Breast epithelium (tissue), 4 donors: ENCODE measurements at regions of chr11 and their contacts with region 1.

Region 1: DNA sequence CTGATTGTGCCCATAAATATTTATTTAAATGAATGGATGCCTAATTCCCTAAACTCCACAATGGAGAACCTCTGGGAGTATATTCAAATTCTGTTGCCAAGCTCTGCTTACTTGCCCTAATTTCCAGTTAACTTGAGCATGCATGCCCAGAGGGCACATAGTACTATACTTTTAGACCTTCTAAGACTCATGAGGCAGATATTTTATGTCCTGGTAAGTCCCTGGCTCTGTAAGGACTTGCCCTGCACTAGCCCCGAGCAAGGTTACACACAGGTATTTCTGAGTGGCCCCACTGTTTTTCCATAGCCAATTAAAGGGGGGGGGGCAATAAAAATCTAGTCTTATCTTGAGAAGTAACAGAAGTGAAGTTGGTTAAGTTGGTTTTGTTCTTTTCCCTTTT is 21.1 kb upstream of the CAPRIN1 start:
- DNase-seq: no peak
- H3K4me3 ChIP-seq: no peak overlapping the region
- H3K27ac ChIP-seq: no peak overlapping the region
- H3K4me1 ChIP-seq: no peaks in the 10 kb centered on the region
- H3K27me3 ChIP-seq: no peaks in the 10 kb centered on the region
- CTCF ChIP-seq: no peak
- POLR2A ChIP-seq: no peak

Region 2: DNA sequence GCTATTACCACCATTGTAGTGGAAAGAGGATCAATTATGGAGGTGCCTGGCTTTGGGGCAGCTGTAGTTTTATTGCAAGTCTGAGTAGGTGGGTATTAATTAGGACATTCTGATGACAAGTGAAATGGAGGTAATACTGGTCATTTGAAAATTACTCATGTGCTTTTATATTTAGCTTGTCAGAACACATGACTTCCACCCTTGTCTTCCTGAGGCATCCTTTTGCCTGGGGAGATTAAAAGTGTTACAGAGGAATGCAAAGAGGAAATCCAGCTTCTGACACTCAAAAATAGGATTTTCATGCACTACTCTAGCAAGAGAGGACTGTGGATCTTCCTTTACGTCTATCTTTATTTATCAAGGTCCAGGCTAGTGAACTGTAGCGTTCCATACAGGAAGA is 23.5 kb before region 1 on chr11:
- intact Hi-C with region 1: no loop called
- DNase-seq: no peak
- H3K4me3 ChIP-seq: no peak overlapping the region
- H3K27ac ChIP-seq: no peak overlapping the region
- H3K4me1 ChIP-seq: no peaks in the 10 kb centered on the region
- H3K27me3 ChIP-seq: no peaks in the 10 kb centered on the region
- CTCF ChIP-seq: no peak
- POLR2A ChIP-seq: no peak

Region 3: GRCh38 chr11:35207471-35208403 is 1177.3 kb after region 1 on chr11:
- intact Hi-C with region 1: loop called (anchors 10 kb)
- DNase-seq: no peak
- H3K4me3 ChIP-seq: no peak overlapping the region
- H3K27ac ChIP-seq: no peak overlapping the region
- H3K4me1 ChIP-seq: no peaks in the 10 kb centered on the region
- H3K27me3 ChIP-seq: no peaks in the 10 kb centered on the region
- CTCF ChIP-seq: no peak
- POLR2A ChIP-seq: no peak